Activated CD4-positive, alpha-beta T cell treated with anti-CD3 and anti-CD28 coated beads, Interleukin-2, amount 10 ng/mL, durations not matched to agents 7 days and 5 days (primary cell): ENCODE measurements at regions of chr12 and their contacts with region 1.

Region 1: GRCh38 chr12:15856097-15856982 is 25.8 kb upstream of the STRAP start:
- DNase-seq: peak; percentile 69
- H3K4me3 Mint-ChIP-seq: no peak overlapping the region
- H3K27ac Mint-ChIP-seq: no peak overlapping the region
- H3K4me1 Mint-ChIP-seq: no peaks in the 10 kb centered on the region
- H3K27me3 Mint-ChIP-seq: peaks cover 17% of the 10 kb centered on the region

Region 2: DNA sequence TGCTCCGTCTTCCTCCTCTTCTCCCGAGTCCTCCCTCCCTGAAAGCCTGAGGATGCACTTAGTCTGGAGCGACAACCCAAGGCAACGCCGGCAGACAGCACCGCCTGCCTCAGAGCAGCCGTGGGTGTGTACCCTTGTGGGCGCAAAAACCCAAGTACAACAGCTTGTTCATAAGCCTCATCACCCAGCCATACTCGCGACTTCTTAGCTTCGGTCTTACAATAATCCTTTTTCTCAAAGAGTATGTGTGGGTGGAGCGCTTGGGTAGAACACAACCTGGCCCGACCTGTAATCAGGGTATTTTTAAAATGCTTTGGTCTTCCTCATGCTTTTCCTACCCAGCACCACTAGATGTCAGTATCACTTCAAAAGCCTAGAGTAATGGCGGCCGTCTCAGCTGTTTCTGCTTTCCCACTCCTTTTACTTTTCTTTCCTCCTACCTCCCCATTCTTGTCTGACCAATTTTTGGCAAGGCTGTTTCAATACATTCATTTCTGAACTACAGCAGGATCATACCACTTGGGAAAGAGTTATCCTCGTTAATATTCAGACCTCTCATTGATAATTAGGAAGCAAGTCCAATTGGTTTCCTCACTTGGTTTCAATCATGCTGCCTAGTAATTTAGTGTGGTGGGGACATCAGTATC is 266.0 kb before region 1 on chr12:
- CTCF ChIA-PET with region 1: interaction called, 10 read pairs
- POLR2A ChIA-PET with region 1: no interaction called
- DNase-seq: peak; percentile 68
- H3K4me3 Mint-ChIP-seq: peak overlapping the region; percentile 44
- H3K27ac Mint-ChIP-seq: peak overlapping the region; percentile 3
- H3K4me1 Mint-ChIP-seq: peaks cover 12% of the 10 kb centered on the region
- H3K27me3 Mint-ChIP-seq: no peaks in the 10 kb centered on the region